ENCODE measurements at regions of chr1 and their contacts with region 1.

Region 1: GRCh38 chr1:170010443-170010842 is 64.1 kb downstream of the KIFAP3 start:
- DNase-seq: peak; percentile 36 to 37
- H3K4me3 ChIP-seq: no peak overlapping the region
- H3K4me3 Mint-ChIP-seq: no peak overlapping the region
- H3K27ac Mint-ChIP-seq: no peak overlapping the region
- H3K4me1 ChIP-seq: no peaks in the 10 kb centered on the region
- H3K4me1 Mint-ChIP-seq: no peaks in the 10 kb centered on the region
- H3K27me3 ChIP-seq: no peaks in the 10 kb centered on the region
- H3K27me3 Mint-ChIP-seq: no peaks in the 10 kb centered on the region
- CTCF ChIP-seq: peak; percentile 43 to 44

Region 2: DNA sequence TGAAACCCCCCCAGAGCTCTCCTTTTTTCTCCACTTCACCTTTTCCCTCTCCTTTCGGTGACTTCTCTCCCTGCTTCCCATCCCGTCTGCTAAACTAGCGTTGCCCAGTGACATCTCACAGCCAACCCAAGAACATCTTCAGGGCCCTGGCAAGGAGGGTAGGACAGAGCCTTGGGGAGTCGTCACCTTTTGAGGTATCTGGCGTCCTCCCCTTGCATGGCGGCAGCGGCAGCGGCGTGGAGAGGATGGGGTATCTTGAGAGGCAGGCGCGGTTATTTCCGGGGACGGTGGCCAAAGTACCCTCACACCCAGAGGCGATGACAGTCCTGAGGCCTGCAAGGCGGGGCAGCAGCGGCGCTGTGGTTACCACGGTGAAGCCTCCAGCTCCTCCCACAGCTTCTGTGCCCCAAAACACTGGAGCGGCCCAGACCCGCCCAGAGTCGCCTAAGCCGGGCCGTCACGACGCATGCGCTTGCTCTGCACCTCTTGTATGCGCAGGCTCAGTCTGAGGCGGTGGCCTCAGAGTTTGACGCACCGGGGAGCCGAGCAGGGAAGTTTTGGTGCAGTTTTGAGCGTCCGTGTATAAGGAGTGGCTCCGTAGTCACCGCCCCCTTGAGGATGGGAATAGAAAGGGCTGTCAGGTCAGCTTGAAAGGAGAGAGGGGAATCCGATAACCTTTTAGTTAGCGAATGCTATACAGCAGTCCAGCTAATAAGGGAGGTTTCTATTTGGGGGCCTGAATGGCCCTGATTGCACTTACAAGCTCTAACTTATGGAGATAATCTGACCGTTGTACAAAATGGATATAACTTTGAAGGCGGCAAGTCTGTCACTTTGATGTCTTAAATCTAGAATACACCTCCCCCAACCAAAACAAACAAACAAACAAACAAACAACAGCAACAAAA is 64.1 kb after region 1 on chr1 and contains the start of gene KIFAP3:
- CTCF ChIA-PET with region 1: interaction called, 3 read pairs
- POLR2A ChIA-PET with region 1: no interaction called
- intact Hi-C with region 1: loop called (anchors 2 kb)
- DNase-seq: peak; percentile 96 to 98
- H3K4me3 ChIP-seq: peak within 1 kb of the TSS; percentile 53
- H3K4me3 Mint-ChIP-seq: peak within 1 kb of the TSS; percentile 88
- H3K27ac Mint-ChIP-seq: peak within 1 kb of the TSS; percentile 85
- H3K4me1 ChIP-seq: no peaks in the 10 kb centered on the region
- H3K4me1 Mint-ChIP-seq: peaks cover 16% of the 10 kb centered on the region
- H3K27me3 ChIP-seq: no peaks in the 10 kb centered on the region
- H3K27me3 Mint-ChIP-seq: no peaks in the 10 kb centered on the region
- CTCF ChIP-seq: peak in 1 of 2 experiments; percentile 70
- total RNA-seq, gene KIFAP3: 10.9 and 11.0 TPM in 2 replicates

Region 3: DNA sequence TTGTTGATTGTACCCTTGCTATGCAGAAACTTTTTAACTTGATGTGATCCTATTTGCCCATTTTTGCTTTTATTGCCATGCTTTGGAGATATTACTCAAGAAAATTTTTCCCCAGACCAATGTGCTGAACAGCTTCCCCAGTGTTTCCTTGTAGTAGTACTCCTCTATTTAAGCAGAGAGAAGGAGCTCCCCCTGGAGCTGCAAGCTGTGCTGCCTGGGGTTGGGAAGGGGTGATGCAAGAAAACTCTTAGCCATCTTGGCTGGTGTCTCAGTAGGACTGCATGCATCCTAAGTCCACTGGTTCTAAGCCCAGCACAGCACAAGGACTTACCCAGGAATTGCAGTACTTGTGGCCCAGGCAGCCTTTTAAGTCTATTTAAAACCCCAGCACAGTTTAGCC is 256.9 kb after region 1 on chr1:
- CTCF ChIA-PET with region 1: no interaction called
- POLR2A ChIA-PET with region 1: no interaction called
- intact Hi-C with region 1: loop called (anchors 1 kb)
- DNase-seq: peak in 1 of 2 experiments; percentile 36
- H3K4me3 ChIP-seq: no peak overlapping the region
- H3K4me3 Mint-ChIP-seq: no peak overlapping the region
- H3K27ac Mint-ChIP-seq: no peak overlapping the region
- H3K4me1 ChIP-seq: no peaks in the 10 kb centered on the region
- H3K4me1 Mint-ChIP-seq: no peaks in the 10 kb centered on the region
- H3K27me3 ChIP-seq: no peaks in the 10 kb centered on the region
- H3K27me3 Mint-ChIP-seq: peaks cover 4% of the 10 kb centered on the region
- CTCF ChIP-seq: peak in 1 of 2 experiments; percentile 22

Region 4: GRCh38 chr1:170461762-170462384 is 451.4 kb after region 1 on chr1:
- CTCF ChIA-PET with region 1: no interaction called
- POLR2A ChIA-PET with region 1: no interaction called
- intact Hi-C with region 1: loop called (anchors 1 kb)
- DNase-seq: no peak
- H3K4me3 ChIP-seq: no peak overlapping the region
- H3K4me3 Mint-ChIP-seq: no peak overlapping the region
- H3K27ac Mint-ChIP-seq: no peak overlapping the region
- H3K4me1 ChIP-seq: no peaks in the 10 kb centered on the region
- H3K4me1 Mint-ChIP-seq: peaks cover 8% of the 10 kb centered on the region
- H3K27me3 ChIP-seq: no peaks in the 10 kb centered on the region
- H3K27me3 Mint-ChIP-seq: peaks cover 9% of the 10 kb centered on the region
- CTCF ChIP-seq: no peak